Heart left ventricle (tissue), 16 donors: ENCODE measurements at regions of chr1 and their contacts with region 1.

Region 1: DNA sequence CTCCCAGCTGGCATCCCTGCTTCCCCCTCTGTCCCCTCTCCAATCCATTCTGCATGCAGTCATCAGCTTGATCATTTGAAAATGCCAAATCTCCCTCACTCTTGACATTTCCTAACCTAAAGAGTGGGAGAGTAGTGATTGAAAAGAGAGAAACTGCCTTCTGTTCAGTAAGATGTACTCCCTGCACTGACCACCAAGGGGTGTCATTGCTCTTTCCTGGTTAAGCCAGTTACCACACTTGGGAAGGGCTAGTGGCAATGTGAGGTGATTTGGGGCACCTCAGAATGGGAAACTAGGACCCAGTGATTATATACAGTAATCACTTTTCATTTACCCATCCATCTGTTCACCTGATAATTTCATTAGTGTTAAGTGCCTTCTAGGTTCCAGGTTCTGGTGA is 6.9 kb upstream of the TMEM269 start:
- DNase-seq: no peak
- ATAC-seq: peak in 3 of 4 donors; percentile 53 to 71 (median 63)
- H3K4me3 ChIP-seq: no peak overlapping the region
- H3K27ac ChIP-seq: no peak overlapping the region
- H3K4me1 ChIP-seq: peaks cover 0 to 3% (median 0%) of the 10 kb centered on the region in 12 donors
- H3K27me3 ChIP-seq: no peaks in the 10 kb centered on the region
- CTCF ChIP-seq: peak; percentile 35 to 65 (median 56)
- POLR2A ChIP-seq: no peak

Region 2: DNA sequence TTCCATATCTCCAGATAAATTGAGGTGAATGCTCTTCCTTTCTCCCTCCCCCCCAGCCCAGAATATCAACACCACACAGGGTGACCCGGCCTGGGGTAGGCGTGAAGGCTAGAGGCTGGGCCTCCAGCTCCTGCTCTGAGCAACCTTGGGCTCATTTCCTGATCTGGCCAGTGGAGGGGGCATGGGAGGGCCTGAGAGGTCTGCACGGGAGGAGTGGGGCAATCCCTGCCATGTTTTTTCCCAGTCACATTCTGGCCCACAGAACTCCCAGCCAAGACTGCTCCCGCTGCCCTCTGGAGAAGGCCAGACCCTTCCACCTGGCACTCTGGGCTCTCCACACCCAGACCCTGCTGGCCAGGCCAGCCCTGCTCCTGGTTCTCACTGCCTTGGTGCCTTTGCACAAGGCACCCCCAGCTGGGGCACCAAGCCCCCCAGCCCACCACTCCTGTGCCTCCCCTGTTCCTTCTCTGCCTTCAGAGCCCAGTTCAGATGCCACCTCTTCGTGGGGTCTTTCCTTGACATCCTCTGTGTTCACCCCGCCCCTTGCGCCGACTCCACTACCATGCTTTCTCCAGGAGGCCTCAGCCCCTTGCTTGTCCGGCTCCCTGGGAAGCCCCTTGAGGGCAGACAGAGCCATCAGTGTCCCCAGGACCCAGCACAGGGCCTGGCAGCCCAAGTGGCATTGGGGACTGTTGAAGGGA is 41.6 kb before region 1 on chr1:
- intact Hi-C with region 1: no loop called
- DNase-seq: no peak
- ATAC-seq: no peak
- H3K4me3 ChIP-seq: no peak overlapping the region
- H3K27ac ChIP-seq: no peak overlapping the region
- H3K4me1 ChIP-seq: peaks cover 0 to 18% (median 0%) of the 10 kb centered on the region in 12 donors
- H3K27me3 ChIP-seq: no peaks in the 10 kb centered on the region
- CTCF ChIP-seq: peak in 2 of 12 donors; percentile 6
- POLR2A ChIP-seq: no peak

Region 3: GRCh38 chr1:42846257-42847110 is 68.6 kb after region 1 on chr1 and contains the start of gene ZNF691:
- intact Hi-C with region 1: loop called in 2 of 10 experiments (anchors 2 to 10 kb)
- DNase-seq: peak; percentile 93 to 97 (median 96)
- ATAC-seq: peak; percentile 98 to 99 (median 98)
- H3K4me3 ChIP-seq: peak within 1 kb of the TSS; percentile 69 to 99 (median 90)
- H3K27ac ChIP-seq: peak within 1 kb of the TSS; percentile 85 to 96 (median 89)
- H3K4me1 ChIP-seq: peaks cover 0 to 28% (median 16%) of the 10 kb centered on the region in 12 donors
- H3K27me3 ChIP-seq: no peaks in the 10 kb centered on the region
- CTCF ChIP-seq: peak; percentile 25 to 77 (median 43)
- POLR2A ChIP-seq: peak in 1 of 2 donors; percentile 75
- total RNA-seq, gene ZNF691: 4.9 to 11.6 (median 8.4) TPM

Region 4: DNA sequence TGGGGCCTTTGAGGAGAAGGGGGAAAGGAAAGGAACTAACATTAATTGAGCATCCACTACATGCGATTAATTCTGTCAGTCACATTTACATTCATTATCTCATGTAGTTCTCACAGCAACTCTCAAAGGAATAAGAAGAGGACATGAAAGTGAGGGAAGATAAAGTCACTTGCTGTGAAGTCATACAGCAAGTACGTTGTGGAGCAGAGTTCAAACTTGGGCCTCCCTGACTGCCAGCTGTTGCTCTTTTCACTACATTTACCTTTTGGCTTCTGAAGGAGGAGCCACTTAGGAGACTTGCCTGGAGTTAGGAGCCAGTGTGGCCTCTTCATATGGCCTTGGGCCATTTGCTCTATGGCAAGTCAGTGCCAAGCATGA is 74.8 kb after region 1 on chr1:
- intact Hi-C with region 1: loop called in 2 of 10 experiments (anchors 2 to 10 kb)
- DNase-seq: no peak
- ATAC-seq: peak in 1 of 4 donors; percentile 7
- H3K4me3 ChIP-seq: no peak overlapping the region
- H3K27ac ChIP-seq: peak overlapping the region in 1 of 12 donors; percentile 1
- H3K4me1 ChIP-seq: peaks cover 0 to 13% (median 4%) of the 10 kb centered on the region in 12 donors
- H3K27me3 ChIP-seq: no peaks in the 10 kb centered on the region
- CTCF ChIP-seq: no peak
- POLR2A ChIP-seq: no peak

Region 5: DNA sequence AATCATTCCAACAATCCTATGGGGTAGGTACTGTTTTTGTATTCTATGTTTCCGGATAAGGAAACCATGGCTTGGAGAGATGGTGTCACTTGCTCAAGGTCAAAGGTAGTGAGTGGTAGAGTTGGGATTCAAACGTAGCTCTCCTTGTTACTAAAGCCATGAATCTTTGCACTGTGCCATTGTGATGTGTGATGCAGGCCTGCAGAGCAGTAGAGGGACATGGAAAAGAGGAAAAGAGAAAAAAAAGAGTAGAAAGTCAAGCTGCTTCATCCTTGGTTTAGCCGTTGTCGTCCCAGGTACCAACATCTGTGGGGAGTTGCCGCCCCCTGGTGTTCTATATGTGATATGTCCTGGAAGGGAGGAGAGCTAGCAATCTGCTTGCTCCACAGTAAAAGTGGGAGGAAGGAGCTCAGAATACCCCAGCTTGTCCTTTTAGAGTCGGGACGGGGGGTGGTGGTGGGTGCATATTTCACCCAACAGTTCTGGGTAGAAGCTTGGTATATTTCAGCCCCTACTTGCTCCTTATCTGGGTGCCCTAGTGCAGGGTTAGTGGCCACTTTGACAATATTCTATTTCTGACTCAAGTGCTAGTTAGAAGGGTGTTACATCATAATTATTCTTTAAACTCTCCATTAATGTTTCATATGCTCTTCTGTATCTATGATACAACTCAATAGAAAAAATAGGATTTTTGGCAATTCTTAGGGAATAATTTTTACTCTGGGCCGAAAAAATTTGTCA is 295.8 kb after region 1 on chr1:
- intact Hi-C with region 1: loop called (anchors 1 to 10 kb)
- DNase-seq: peak in 4 of 5 donors; percentile 64 to 78 (median 68)
- ATAC-seq: peak; percentile 68 to 91 (median 88)
- H3K4me3 ChIP-seq: no peak overlapping the region
- H3K27ac ChIP-seq: peak overlapping the region in 2 of 12 donors; percentile 40 to 44
- H3K4me1 ChIP-seq: peaks cover 0 to 9% (median 0%) of the 10 kb centered on the region in 12 donors
- H3K27me3 ChIP-seq: peaks cover 0 to 2% (median 0%) of the 10 kb centered on the region in 9 donors
- CTCF ChIP-seq: peak; percentile 69 to 93 (median 84)
- POLR2A ChIP-seq: no peak